Lower leg skin (tissue), 4 donors: ENCODE measurements at regions of chr16 and their contacts with region 1.

Region 1: DNA sequence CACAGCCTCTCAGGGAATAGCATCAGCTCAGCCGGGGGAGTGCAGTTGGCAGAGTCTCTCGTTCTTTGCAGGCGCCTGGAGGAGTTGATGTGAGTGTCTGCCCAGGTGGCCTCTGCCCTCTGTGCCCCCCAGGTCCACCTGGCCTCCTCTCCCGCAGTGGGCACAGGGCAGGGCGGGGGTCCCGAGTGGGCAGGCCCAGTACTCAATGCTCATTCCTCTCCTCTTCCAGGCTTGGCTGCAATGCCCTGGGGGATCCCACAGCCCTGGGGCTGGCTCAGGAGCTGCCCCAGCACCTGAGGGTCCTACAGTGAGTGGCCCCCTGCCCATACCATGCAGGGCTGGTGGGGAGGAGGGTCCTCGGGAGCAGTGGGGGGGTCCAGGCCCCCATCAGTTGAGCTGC is 14.7 kb upstream of the CPNE2 start:
- DNase-seq: no peak
- H3K4me3 ChIP-seq: no peak overlapping the region
- CTCF ChIP-seq: no peak
- POLR2A ChIP-seq: no peak

Region 2: GRCh38 chr16:56898847-56899246 is 178.9 kb before region 1 on chr16:
- intact Hi-C with region 1: no loop called
- DNase-seq: no peak
- H3K4me3 ChIP-seq: no peak overlapping the region
- CTCF ChIP-seq: no peak
- POLR2A ChIP-seq: no peak

Region 3: GRCh38 chr16:57244767-57245471 is 167.2 kb after region 1 on chr16 and contains the start of gene ARL2BP:
- intact Hi-C with region 1: no loop called
- DNase-seq: peak; percentile 97 to 99
- H3K4me3 ChIP-seq: peak within 1 kb of the TSS; percentile 85
- CTCF ChIP-seq: no peak
- POLR2A ChIP-seq: no peak
- total RNA-seq, gene ARL2BP: 36.3 to 62.6 (median 48.0) TPM

Region 4: GRCh38 chr16:57753771-57754707 is 676.3 kb after region 1 on chr16:
- intact Hi-C with region 1: no loop called
- DNase-seq: no peak
- H3K4me3 ChIP-seq: no peak overlapping the region
- CTCF ChIP-seq: no peak
- POLR2A ChIP-seq: no peak

Region 5: GRCh38 chr16:58411742-58412614 is 1334.3 kb after region 1 on chr16:
- intact Hi-C with region 1: loop called (anchors 5 kb)
- DNase-seq: no peak
- H3K4me3 ChIP-seq: no peak overlapping the region
- CTCF ChIP-seq: no peak
- POLR2A ChIP-seq: no peak